ENCODE measurements at regions of chr1 and their contacts with region 1.

Region 1: GRCh38 chr1:207797229-207797961 is 45.5 kb downstream of the CD46 start:
- DNase-seq: peak; percentile 90 to 96
- ATAC-seq: peak; percentile 90
- H3K4me3 ChIP-seq: no peak overlapping the region
- H3K27ac ChIP-seq: no peak overlapping the region
- H3K4me1 ChIP-seq: no peaks in the 10 kb centered on the region
- H3K27me3 ChIP-seq: no peaks in the 10 kb centered on the region

Region 2: GRCh38 chr1:207654320-207654719 is 143.1 kb before region 1 on chr1:
- intact Hi-C with region 1: loop called in 1 of 2 experiments (anchors 10 kb)
- DNase-seq: no peak
- ATAC-seq: no peak
- H3K4me3 ChIP-seq: no peak overlapping the region
- H3K27ac ChIP-seq: no peak overlapping the region
- H3K4me1 ChIP-seq: no peaks in the 10 kb centered on the region
- H3K27me3 ChIP-seq: no peaks in the 10 kb centered on the region

Region 3: GRCh38 chr1:207751790-207752455 is 45.5 kb before region 1 on chr1 and contains the start of gene CD46:
- intact Hi-C with region 1: loop called in 1 of 2 experiments (anchors 5 kb)
- DNase-seq: peak; percentile 98
- ATAC-seq: peak; percentile 100
- H3K4me3 ChIP-seq: peak within 1 kb of the TSS; percentile 59 to 93
- H3K27ac ChIP-seq: peak within 1 kb of the TSS; percentile 76 to 93
- H3K4me1 ChIP-seq: peaks cover 0 to 4% of the 10 kb centered on the region in 2 donors
- H3K27me3 ChIP-seq: no peaks in the 10 kb centered on the region
- total RNA-seq, gene CD46: 189 to 210 TPM

Region 4: GRCh38 chr1:207779008-207779407 is 18.4 kb before region 1 on chr1:
- intact Hi-C with region 1: no loop called
- DNase-seq: no peak
- ATAC-seq: no peak
- H3K4me3 ChIP-seq: no peak overlapping the region
- H3K27ac ChIP-seq: no peak overlapping the region
- H3K4me1 ChIP-seq: no peaks in the 10 kb centered on the region
- H3K27me3 ChIP-seq: no peaks in the 10 kb centered on the region

Region 5: DNA sequence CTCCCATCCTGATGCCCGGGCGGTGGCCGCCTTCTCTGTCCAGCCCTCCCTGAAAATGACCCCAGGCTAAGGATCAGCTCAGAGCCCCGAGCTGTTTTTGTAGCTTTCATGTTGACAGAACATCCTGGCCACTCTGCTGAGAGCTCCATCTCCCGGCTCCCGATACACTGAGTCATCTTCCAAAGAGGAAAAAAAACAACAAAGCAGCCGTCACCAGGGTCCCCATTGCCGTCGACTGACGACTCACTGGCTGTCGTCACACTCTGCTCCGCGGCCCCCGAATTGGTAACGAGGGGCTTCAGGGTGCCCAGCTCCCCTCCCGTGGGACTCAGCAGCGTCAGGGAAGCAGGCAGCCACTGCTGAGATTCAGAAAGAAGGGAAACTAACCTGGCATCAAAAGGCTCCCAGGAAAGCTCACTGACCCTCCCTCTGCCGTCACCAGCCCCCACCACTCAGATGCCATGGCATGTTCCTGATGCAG is 21.6 kb after region 1 on chr1:
- intact Hi-C with region 1: loop called in 1 of 2 experiments (anchors 2 kb)
- DNase-seq: no peak
- ATAC-seq: no peak
- H3K4me3 ChIP-seq: peak overlapping the region in 1 of 2 donors; percentile 93
- H3K27ac ChIP-seq: peak overlapping the region in 1 of 2 donors; percentile 50
- H3K4me1 ChIP-seq: peaks cover 0 to 3% of the 10 kb centered on the region in 2 donors
- H3K27me3 ChIP-seq: no peaks in the 10 kb centered on the region